Activated T-helper 1 cell treated with anti-CD3 and anti-CD28 coated beads, Interleukin-12 subunit alpha, Interleukin-12 subunit beta, Interleukin-2, Interleukin-4 antibody, amounts not matched to agents 30 ng/mL and 10 ng/mL and 1 ng/mL, durations not matched to agents 14 hours and 24 hours and 36 hours (primary cell): ENCODE measurements at regions of chr2 and their contacts with region 1.

Region 1: GRCh38 chr2:161077367-161078210 is 82.6 kb upstream of the TANK start:
- DNase-seq: peak; percentile 82
- H3K4me3 Mint-ChIP-seq: peak overlapping the region; percentile 54
- H3K27ac Mint-ChIP-seq: peak overlapping the region; percentile 95
- H3K4me1 Mint-ChIP-seq: peaks cover 77% of the 10 kb centered on the region
- H3K27me3 Mint-ChIP-seq: peaks cover 1% of the 10 kb centered on the region

Region 2: DNA sequence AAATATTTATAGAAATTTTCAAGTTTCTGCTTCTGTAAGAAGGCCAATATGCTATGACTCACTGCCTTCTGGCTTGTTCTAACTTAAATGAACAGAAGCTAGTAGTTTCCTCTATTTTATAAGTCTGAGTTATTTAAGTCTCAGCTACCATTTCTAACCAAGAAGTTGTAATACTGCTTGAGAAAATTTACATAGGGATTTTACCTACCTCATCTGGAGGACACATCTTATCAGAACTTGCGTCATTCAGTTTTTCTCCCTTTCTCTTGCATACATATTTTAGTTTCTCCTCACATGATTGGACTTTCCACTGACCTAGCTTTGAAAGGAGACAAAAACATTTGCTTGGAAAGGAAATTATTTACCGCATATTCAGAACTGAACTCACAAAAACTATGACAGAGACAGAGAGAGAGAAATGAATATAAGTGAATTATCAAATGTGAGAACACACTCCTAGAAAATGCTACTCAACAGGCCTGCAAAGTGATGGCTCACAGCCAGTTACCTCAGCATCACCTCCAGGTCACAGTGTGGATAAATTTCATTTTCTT is 1198.5 kb before region 1 on chr2:
- intact Hi-C with region 1: loop called (anchors 1 kb)
- DNase-seq: no peak
- H3K4me3 Mint-ChIP-seq: no peak overlapping the region
- H3K27ac Mint-ChIP-seq: peak overlapping the region; percentile 86
- H3K4me1 Mint-ChIP-seq: peaks cover 32% of the 10 kb centered on the region
- H3K27me3 Mint-ChIP-seq: no peaks in the 10 kb centered on the region

Region 3: DNA sequence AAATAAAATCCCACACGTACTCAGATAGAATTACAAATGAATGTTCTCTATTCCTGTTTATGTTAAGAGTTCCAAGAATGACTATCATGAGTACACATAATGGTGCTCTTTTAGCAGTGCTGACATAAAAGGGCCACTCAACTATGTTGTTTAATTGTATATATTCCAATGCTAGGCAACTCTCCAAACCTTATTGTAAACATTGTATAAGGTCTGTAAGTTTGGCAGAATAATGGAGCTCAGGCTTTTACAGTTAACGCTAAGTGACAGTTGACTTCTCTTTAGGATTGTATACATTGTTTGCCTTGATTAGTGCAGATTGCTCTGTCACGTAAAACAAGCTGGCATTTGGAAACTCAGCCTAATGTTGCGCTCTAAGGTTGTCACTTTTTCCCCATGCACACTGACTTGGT is 604.7 kb before region 1 on chr2:
- intact Hi-C with region 1: loop called (anchors 1 kb)
- DNase-seq: no peak
- H3K4me3 Mint-ChIP-seq: peak overlapping the region; percentile 49
- H3K27ac Mint-ChIP-seq: peak overlapping the region; percentile 59
- H3K4me1 Mint-ChIP-seq: peaks cover 67% of the 10 kb centered on the region
- H3K27me3 Mint-ChIP-seq: no peaks in the 10 kb centered on the region

Region 4: GRCh38 chr2:161104054-161104553 is 26.5 kb after region 1 on chr2:
- intact Hi-C with region 1: loop called (anchors 1 kb)
- DNase-seq: no peak
- H3K4me3 Mint-ChIP-seq: peak overlapping the region; percentile 46
- H3K27ac Mint-ChIP-seq: peak overlapping the region; percentile 66
- H3K4me1 Mint-ChIP-seq: peaks cover 40% of the 10 kb centered on the region
- H3K27me3 Mint-ChIP-seq: no peaks in the 10 kb centered on the region

Region 5: DNA sequence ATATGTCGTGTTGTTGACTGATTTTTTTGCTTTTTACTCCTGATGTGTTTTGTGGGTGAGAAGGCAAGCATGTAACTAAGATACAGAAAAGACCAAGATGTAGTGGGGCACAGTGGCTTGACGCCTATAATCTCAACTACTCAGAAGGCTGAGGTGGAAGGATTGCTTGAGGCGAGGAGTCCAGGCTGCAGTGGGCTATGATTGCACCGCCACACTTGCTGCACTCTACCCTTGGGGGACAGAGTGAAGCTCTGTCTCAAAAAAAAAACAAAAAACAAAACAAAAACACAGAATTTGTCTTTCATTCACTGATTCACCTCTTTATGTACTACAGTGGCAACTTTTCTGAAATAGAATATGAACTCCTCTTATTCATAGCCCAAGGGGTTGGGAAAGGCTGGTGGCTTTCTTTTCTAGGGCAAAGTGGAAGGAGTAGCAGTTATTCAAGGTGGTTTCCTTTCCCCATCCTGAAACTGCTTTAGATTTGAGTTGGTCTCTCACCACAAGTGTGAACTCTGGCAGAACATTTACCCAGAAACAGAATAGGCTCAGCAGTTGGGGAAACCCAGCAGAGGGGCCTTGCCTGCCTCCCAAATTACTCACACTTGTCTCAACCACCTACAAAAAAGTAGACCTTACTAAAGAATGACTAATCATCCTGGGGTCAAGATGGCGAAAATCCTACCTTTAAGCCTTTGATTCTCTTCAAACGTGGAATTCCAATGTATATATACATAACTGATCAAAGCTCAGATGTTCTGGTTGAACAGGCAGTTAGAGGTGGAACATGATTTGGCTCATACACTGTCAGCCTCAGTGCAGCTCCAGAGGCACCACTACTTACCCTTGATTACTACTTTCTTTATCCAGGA is 89.2 kb after region 1 on chr2:
- intact Hi-C with region 1: loop called (anchors 1 kb)
- DNase-seq: peak; percentile 74
- H3K4me3 Mint-ChIP-seq: peak overlapping the region; percentile 75
- H3K27ac Mint-ChIP-seq: peak overlapping the region; percentile 94
- H3K4me1 Mint-ChIP-seq: peaks cover 100% of the 10 kb centered on the region
- H3K27me3 Mint-ChIP-seq: no peaks in the 10 kb centered on the region

Region 6: GRCh38 chr2:161190050-161190449 is 112.5 kb after region 1 on chr2:
- intact Hi-C with region 1: no loop called
- DNase-seq: no peak
- H3K4me3 Mint-ChIP-seq: no peak overlapping the region
- H3K27ac Mint-ChIP-seq: no peak overlapping the region
- H3K4me1 Mint-ChIP-seq: peaks cover 76% of the 10 kb centered on the region
- H3K27me3 Mint-ChIP-seq: no peaks in the 10 kb centered on the region

Region 7: DNA sequence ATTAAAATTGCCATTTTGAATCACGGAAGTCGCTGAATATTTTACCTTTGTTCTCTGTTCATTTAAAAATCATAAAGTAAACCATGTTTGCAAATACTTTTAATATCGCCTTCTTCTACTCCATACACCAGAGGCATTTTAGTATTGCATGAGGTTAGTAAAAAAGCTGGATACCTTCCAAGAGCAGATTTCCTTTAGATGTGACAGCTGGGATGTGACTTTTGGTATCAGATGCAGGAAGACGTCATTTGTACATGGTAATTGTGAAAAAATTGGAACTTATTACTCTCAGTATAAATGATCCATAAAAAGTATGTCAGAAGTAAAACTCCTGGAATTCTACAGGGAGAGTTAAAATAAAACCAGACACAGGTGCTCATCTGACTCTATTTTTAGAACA is 636.1 kb after region 1 on chr2:
- intact Hi-C with region 1: no loop called
- DNase-seq: no peak
- H3K4me3 Mint-ChIP-seq: no peak overlapping the region
- H3K27ac Mint-ChIP-seq: no peak overlapping the region
- H3K4me1 Mint-ChIP-seq: peaks cover 9% of the 10 kb centered on the region
- H3K27me3 Mint-ChIP-seq: peaks cover 22% of the 10 kb centered on the region

Region 8: GRCh38 chr2:161954103-161954502 is 876.5 kb after region 1 on chr2:
- intact Hi-C with region 1: loop called (anchors 1 kb)
- DNase-seq: no peak
- H3K4me3 Mint-ChIP-seq: peak overlapping the region; percentile 19
- H3K27ac Mint-ChIP-seq: peak overlapping the region; percentile 93
- H3K4me1 Mint-ChIP-seq: peaks cover 80% of the 10 kb centered on the region
- H3K27me3 Mint-ChIP-seq: no peaks in the 10 kb centered on the region

Region 9: DNA sequence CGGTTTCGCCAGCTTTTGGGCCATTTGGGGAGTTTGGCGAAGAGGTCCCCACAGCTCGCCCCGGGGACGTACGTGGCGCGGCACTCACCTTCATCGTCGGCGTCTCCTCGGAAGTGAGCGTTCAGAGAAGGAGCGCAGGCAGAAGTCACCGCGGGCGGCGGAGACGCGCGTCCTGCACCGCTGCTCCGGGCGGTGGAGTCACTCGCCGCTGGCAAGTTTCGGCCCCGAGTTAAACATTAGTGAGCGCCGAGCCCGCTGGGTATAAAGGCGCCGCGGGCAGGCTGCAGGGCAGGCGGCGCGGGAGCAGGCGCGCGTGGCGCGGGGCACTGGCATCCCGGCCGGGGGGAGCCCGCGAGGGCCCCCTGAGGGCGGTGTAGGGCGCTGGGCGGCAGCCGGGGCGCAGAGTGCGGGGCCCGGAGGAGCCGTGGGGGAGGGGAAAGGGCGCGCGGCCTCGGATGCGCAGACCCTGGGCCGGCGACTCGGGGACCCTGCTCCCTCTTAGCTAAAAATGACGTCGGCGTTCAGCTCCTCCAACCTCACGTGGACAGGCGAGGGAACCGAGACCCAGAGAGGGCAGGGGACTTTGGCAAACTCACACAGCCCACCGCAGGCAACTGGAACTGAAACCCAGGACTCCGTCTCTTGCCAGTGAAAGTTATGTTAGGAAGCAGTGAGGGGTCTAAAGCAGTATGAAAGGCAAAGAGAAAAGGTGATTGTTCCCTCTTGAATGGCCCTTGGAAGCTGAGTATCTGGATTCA is 996.5 kb after region 1 on chr2 and contains the start of gene DPP4:
- intact Hi-C with region 1: loop called (anchors 5 kb)
- DNase-seq: peak; percentile 42
- H3K4me3 Mint-ChIP-seq: peak within 1 kb of the TSS; percentile 98
- H3K27ac Mint-ChIP-seq: peak within 1 kb of the TSS; percentile 93
- H3K4me1 Mint-ChIP-seq: peaks cover 55% of the 10 kb centered on the region
- H3K27me3 Mint-ChIP-seq: no peaks in the 10 kb centered on the region
- total RNA-seq, gene DPP4: 94.4 and 99.9 TPM in 2 replicates